PC-9 (cell line): ENCODE measurements at regions of chr14 and their contacts with region 1.

Region 1: DNA sequence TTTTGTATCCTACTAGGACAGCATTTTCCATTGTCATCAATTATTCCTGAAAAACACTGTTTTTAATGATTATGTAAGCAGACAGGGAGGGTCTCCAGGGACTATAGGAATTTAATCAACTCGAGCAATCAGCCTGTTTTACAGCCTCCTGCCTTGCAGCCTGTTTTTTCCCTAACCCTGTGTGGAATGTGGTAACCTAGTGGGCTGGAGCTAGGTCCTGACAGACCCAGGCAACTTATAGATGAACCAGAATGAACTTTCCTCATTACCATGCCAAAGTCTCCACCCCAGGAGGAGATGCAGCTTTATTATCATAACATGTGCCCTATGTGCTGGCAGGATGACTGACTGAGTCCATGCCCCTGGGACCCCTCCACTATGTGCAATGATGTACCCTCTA is 375.1 kb downstream of the BMP4 start:
- DNase-seq: no peak
- H3K4me3 ChIP-seq: no peak overlapping the region
- H3K27ac ChIP-seq: no peak overlapping the region
- H3K4me1 ChIP-seq: no peaks in the 10 kb centered on the region
- H3K27me3 ChIP-seq: no peaks in the 10 kb centered on the region
- CTCF ChIP-seq: no peak

Region 2: GRCh38 chr14:53432378-53432802 is 149.1 kb before region 1 on chr14:
- CTCF ChIA-PET with region 1: no interaction called
- POLR2A ChIA-PET with region 1: no interaction called
- intact Hi-C with region 1: no loop called
- DNase-seq: peak in 1 of 2 experiments; percentile 25
- H3K4me3 ChIP-seq: no peak overlapping the region
- H3K27ac ChIP-seq: no peak overlapping the region
- H3K4me1 ChIP-seq: no peaks in the 10 kb centered on the region
- H3K27me3 ChIP-seq: no peaks in the 10 kb centered on the region
- CTCF ChIP-seq: peak; percentile 82

Region 3: GRCh38 chr14:53613404-53614253 is 32.1 kb after region 1 on chr14:
- CTCF ChIA-PET with region 1: interaction called, 10 read pairs
- POLR2A ChIA-PET with region 1: no interaction called
- intact Hi-C with region 1: no loop called
- DNase-seq: peak; percentile 31 to 84
- H3K4me3 ChIP-seq: peak overlapping the region; percentile 42; the same call in 1 of the 2 replicates
- H3K27ac ChIP-seq: peak overlapping the region; percentile 51
- H3K4me1 ChIP-seq: peaks cover 22% of the 10 kb centered on the region
- H3K27me3 ChIP-seq: no peaks in the 10 kb centered on the region
- CTCF ChIP-seq: no peak